Naive thymus-derived CD4-positive, alpha-beta T cell (primary cell): ENCODE measurements at regions of chr2 and their contacts with region 1.

Region 1: GRCh38 chr2:203934041-203934492 is 2.5 kb upstream of the ICOS start:
- DNase-seq: peak in 8 of 9 donors; percentile 37 to 80 (median 60)
- ATAC-seq: peak; percentile 31
- H3K4me3 ChIP-seq: peak overlapping the region; percentile 22
- H3K4me3 Mint-ChIP-seq: peak overlapping the region; percentile 69 to 92 (median 78)
- H3K27ac ChIP-seq: peak overlapping the region; percentile 71
- H3K27ac Mint-ChIP-seq: peak overlapping the region; percentile 87 to 97 (median 93)
- H3K4me1 ChIP-seq: peaks cover 40 to 42% of the 10 kb centered on the region in 2 donors
- H3K4me1 Mint-ChIP-seq: peaks cover 33 to 68% (median 55%) of the 10 kb centered on the region in 7 donors
- H3K27me3 ChIP-seq: no peaks in the 10 kb centered on the region
- H3K27me3 Mint-ChIP-seq: no peaks in the 10 kb centered on the region

Region 2: GRCh38 chr2:202911512-202912341 is 1022.3 kb before region 1 on chr2 and contains the starts of genes CARF and WDR12:
- CTCF ChIA-PET with region 1: no interaction called
- POLR2A ChIA-PET with region 1: no interaction called
- intact Hi-C with region 1: loop called in 1 of 2 experiments (anchors 5 kb)
- DNase-seq: peak; percentile 81 to 93 (median 89)
- ATAC-seq: peak; percentile 93
- H3K4me3 ChIP-seq: peak within 1 kb of the TSS; percentile 82
- H3K4me3 Mint-ChIP-seq: peak within 1 kb of the TSS; percentile 90 to 100 (median 98)
- H3K27ac ChIP-seq: peak within 1 kb of the TSS; percentile 79
- H3K27ac Mint-ChIP-seq: peak within 1 kb of the TSS; percentile 93 to 99 (median 97)
- H3K4me1 ChIP-seq: peaks cover 4 to 11% of the 10 kb centered on the region in 2 donors
- H3K4me1 Mint-ChIP-seq: peaks cover 24 to 50% (median 34%) of the 10 kb centered on the region in 7 donors
- H3K27me3 ChIP-seq: no peaks in the 10 kb centered on the region
- H3K27me3 Mint-ChIP-seq: no peaks in the 10 kb centered on the region
- total RNA-seq, gene CARF: 10.2 to 31.2 (median 15.4) TPM
- total RNA-seq, gene WDR12: 17.2 to 50.4 (median 20.8) TPM

Region 3: GRCh38 chr2:203878063-203878462 is 56.0 kb before region 1 on chr2:
- CTCF ChIA-PET with region 1: no interaction called
- POLR2A ChIA-PET with region 1: no interaction called
- intact Hi-C with region 1: no loop called
- DNase-seq: no peak
- ATAC-seq: no peak
- H3K4me3 ChIP-seq: no peak overlapping the region
- H3K4me3 Mint-ChIP-seq: no peak overlapping the region
- H3K27ac ChIP-seq: no peak overlapping the region
- H3K27ac Mint-ChIP-seq: peak overlapping the region in 3 of 9 donors; percentile 2 to 78 (median 48)
- H3K4me1 ChIP-seq: peaks cover 9 to 10% of the 10 kb centered on the region in 2 donors
- H3K4me1 Mint-ChIP-seq: peaks cover 13 to 34% (median 27%) of the 10 kb centered on the region in 7 donors
- H3K27me3 ChIP-seq: no peaks in the 10 kb centered on the region
- H3K27me3 Mint-ChIP-seq: no peaks in the 10 kb centered on the region

Region 4: DNA sequence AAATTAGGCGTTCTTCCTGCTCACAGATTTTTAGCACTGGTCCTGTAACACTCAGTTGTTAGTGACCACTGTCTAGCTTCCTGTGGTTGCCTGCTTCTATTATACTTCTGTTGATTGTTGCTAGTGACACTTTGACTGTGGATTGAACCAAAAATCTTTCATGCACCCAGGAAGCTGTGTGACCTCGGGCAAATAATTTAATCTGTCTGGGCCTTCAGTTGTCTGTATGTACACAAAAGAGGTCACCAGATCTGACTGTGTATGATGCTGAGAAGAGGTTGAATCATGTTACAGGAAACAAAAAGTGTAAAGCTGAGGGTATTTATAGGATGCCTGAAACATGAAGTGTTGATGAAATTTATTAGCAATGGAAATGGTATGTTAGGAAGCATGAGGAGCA is 15.2 kb after region 1 on chr2:
- CTCF ChIA-PET with region 1: interaction called, 5 read pairs
- POLR2A ChIA-PET with region 1: interaction called, 37 read pairs
- intact Hi-C with region 1: loop called (anchors 1 kb)
- DNase-seq: no peak
- ATAC-seq: peak; percentile 29
- H3K4me3 ChIP-seq: no peak overlapping the region
- H3K4me3 Mint-ChIP-seq: peak overlapping the region; percentile 7 to 91 (median 64)
- H3K27ac ChIP-seq: no peak overlapping the region
- H3K27ac Mint-ChIP-seq: peak overlapping the region; percentile 4 to 86 (median 66)
- H3K4me1 ChIP-seq: peaks cover 56 to 65% of the 10 kb centered on the region in 2 donors
- H3K4me1 Mint-ChIP-seq: peaks cover 54 to 96% (median 91%) of the 10 kb centered on the region in 7 donors
- H3K27me3 ChIP-seq: no peaks in the 10 kb centered on the region
- H3K27me3 Mint-ChIP-seq: no peaks in the 10 kb centered on the region

Region 5: GRCh38 chr2:203997980-203998809 is 64.1 kb after region 1 on chr2:
- CTCF ChIA-PET with region 1: interaction called, 4 read pairs
- POLR2A ChIA-PET with region 1: interaction called, 6 read pairs
- intact Hi-C with region 1: loop called in 1 of 2 experiments (anchors 2 kb)
- DNase-seq: no peak
- ATAC-seq: peak; percentile 34
- H3K4me3 ChIP-seq: no peak overlapping the region
- H3K4me3 Mint-ChIP-seq: peak overlapping the region in 3 of 10 donors; percentile 67 to 72 (median 69)
- H3K27ac ChIP-seq: no peak overlapping the region
- H3K27ac Mint-ChIP-seq: peak overlapping the region in 2 of 9 donors; percentile 12 to 71
- H3K4me1 ChIP-seq: peaks cover 40 to 55% of the 10 kb centered on the region in 2 donors
- H3K4me1 Mint-ChIP-seq: peaks cover 30 to 67% (median 58%) of the 10 kb centered on the region in 7 donors
- H3K27me3 ChIP-seq: no peaks in the 10 kb centered on the region
- H3K27me3 Mint-ChIP-seq: no peaks in the 10 kb centered on the region

Region 6: DNA sequence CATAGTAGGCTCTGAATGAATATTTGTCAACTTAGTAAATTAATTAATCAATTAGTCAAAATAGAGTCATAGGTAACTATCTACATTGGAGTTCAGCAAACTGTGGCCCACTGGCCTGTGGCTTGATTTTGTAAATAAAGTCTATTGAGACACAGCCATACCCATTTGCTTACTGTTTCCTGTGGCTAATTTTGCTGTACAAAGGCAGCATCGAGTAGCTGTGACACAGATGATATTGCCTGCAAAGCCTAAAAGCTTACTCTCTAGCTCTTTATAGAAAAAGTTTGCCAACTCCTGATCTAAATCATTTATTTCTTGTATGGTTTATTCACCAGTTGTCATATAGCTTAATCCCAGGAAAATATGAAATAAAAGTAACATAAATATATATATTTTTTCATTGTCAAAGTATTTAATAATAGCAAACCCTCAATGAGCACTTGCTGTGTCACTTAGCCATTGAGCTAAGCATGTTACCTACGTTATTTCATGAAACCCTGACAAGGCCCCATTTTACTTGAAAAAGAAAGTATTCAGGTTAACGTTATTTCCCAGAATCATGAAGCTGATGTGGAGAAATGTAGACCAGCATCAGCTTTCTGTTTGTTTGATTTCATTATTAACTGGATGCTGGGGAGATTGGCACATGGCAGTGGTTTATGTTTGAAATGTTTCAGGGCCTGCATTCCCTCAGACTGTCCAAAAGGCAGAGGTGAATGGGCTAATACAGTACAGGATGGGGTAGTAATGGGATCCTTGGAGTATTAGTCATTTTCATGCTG is 72.1 kb after region 1 on chr2:
- CTCF ChIA-PET with region 1: no interaction called
- POLR2A ChIA-PET with region 1: interaction called, 3 read pairs
- intact Hi-C with region 1: loop called (anchors 2 kb)
- DNase-seq: peak in 1 of 9 donors; percentile 23
- ATAC-seq: no peak
- H3K4me3 ChIP-seq: no peak overlapping the region
- H3K4me3 Mint-ChIP-seq: peak overlapping the region in 5 of 10 donors; percentile 17 to 59 (median 44)
- H3K27ac ChIP-seq: no peak overlapping the region
- H3K27ac Mint-ChIP-seq: peak overlapping the region in 5 of 9 donors; percentile 60 to 93 (median 83)
- H3K4me1 ChIP-seq: peaks cover 9 to 37% of the 10 kb centered on the region in 2 donors
- H3K4me1 Mint-ChIP-seq: peaks cover 24 to 81% (median 78%) of the 10 kb centered on the region in 7 donors
- H3K27me3 ChIP-seq: no peaks in the 10 kb centered on the region
- H3K27me3 Mint-ChIP-seq: no peaks in the 10 kb centered on the region